CD4-positive, alpha-beta memory T cell (primary cell): ENCODE measurements at regions of chr4 and their contacts with region 1.

Region 1: DNA sequence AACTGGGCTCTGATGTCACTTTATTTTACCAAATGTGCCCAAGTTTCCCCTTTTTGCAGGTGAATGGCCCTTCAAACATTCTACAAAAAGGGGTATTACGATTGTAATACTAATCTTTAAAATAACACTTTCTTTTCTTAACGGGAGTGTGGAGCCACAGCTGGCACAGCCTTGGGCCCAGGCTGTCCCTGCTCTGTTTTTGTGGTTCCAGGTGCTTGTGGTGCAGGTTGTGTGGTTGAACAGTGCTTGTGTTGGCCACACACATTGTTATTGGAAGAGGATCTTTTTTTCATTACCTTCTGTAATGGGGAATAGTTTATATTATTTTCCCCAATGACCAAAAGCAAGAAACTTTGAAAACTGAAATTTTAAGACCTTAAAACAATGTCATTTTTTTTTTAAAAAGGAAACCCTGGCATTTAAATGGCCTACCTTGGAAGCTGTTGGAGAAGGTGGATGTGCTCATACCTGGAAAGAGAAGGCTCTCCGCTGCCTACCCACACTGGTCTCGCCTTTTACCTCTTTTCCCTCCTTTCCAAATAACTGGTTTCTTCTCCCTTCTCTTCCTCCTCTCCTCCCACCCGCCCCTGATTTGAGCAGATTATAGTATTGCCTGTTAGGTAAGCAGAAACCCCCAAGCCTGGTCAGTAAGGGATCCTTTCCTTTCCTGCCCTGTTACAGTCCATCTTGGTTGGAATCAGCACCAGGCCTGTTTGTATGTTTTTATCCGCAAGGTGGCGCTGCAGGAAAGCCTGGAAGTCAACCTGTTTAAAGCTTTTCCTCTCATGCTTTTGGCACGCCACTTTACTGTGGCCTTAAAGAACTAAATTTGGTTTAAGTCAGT is 28.6 kb downstream of the HADH start:
- DNase-seq: peak; percentile 72 to 77 (median 74)
- H3K4me3 ChIP-seq: no peak overlapping the region
- H3K4me3 Mint-ChIP-seq: no peak overlapping the region
- H3K27ac ChIP-seq: no peak overlapping the region
- H3K27ac Mint-ChIP-seq: peak overlapping the region in 2 of 7 donors; percentile 15 to 65
- H3K4me1 ChIP-seq: no peaks in the 10 kb centered on the region
- H3K4me1 Mint-ChIP-seq: peaks cover 1 to 12% (median 3%) of the 10 kb centered on the region in 4 donors
- H3K27me3 ChIP-seq: no peaks in the 10 kb centered on the region
- H3K27me3 Mint-ChIP-seq: no peaks in the 10 kb centered on the region

Region 2: DNA sequence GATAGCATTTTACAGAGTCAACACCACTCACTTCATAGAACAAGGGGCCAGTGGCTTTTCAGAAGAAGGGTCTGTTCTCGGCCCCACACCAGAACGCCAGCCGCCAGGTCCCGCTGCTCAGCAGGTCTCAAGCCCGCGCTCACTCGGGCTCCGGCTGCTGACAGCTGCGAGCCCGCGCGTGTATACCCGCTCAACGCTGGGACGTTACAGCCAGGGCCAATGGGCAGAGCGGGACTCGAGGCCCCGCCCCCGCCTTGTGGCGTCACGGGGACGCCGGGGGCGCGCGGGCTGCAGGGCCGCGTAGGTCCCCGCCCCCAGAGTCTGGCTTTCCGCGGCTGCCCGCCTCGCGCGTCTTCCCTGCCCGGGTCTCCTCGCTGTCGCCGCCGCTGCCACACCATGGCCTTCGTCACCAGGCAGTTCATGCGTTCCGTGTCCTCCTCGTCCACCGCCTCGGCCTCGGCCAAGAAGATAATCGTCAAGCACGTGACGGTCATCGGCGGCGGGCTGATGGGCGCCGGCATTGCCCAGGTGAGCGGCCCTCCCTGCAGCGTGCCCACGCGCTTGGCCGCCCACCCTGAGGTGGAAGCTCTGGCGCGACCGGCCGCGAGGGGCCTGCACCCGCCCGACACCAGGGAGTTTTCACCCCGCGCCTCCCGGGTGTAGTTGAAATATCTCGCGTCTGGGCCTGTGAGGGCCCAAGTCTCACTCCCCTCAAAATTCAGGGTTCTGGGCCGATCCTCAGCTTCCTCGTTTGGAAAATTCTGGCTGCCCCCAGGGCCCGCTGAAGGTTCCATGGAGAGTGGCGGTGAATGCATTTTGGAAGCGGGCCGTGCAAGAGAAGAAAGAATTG is 28.5 kb before region 1 on chr4 and contains the start of gene HADH:
- CTCF ChIA-PET with region 1: interaction called, 10 read pairs
- POLR2A ChIA-PET with region 1: interaction called, 3 read pairs
- intact Hi-C with region 1: no loop called
- DNase-seq: peak; percentile 92 to 95 (median 95)
- H3K4me3 ChIP-seq: peak within 1 kb of the TSS; percentile 49 to 75
- H3K4me3 Mint-ChIP-seq: peak within 1 kb of the TSS; percentile 90 to 99 (median 97)
- H3K27ac ChIP-seq: peak within 1 kb of the TSS; percentile 80
- H3K27ac Mint-ChIP-seq: peak within 1 kb of the TSS; percentile 87 to 98 (median 96)
- H3K4me1 ChIP-seq: peaks cover 39% of the 10 kb centered on the region
- H3K4me1 Mint-ChIP-seq: peaks cover 30 to 53% (median 42%) of the 10 kb centered on the region in 4 donors
- H3K27me3 ChIP-seq: no peaks in the 10 kb centered on the region
- H3K27me3 Mint-ChIP-seq: no peaks in the 10 kb centered on the region
- total RNA-seq, gene HADH: 20.0 to 23.0 TPM

Region 3: DNA sequence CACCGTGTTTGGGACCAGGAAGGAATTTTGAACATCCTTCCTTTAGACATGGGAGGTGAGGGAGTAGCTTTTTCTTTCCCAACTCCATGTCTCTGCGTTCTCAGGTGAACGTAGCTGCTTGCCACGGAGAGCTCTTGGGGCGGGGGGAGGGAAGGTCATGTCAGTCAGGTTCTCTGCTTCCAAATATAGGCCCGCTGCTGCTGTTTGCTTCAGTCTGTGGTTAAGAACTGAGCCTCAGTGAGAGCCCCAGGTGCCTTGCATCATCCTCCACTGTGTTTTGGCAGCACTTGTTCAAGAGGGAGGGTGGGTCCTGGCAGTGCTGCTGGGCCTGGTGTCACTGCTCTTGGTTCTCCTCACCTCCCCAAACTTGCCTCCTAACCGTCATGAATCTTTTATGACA is 18.0 kb after region 1 on chr4:
- CTCF ChIA-PET with region 1: interaction called, 10 read pairs
- POLR2A ChIA-PET with region 1: no interaction called
- intact Hi-C with region 1: no loop called
- DNase-seq: peak; percentile 45 to 74 (median 60)
- H3K4me3 ChIP-seq: no peak overlapping the region
- H3K4me3 Mint-ChIP-seq: peak overlapping the region in 7 of 8 donors; percentile 21 to 75 (median 60)
- H3K27ac ChIP-seq: peak overlapping the region; percentile 0
- H3K27ac Mint-ChIP-seq: peak overlapping the region; percentile 59 to 93 (median 88)
- H3K4me1 ChIP-seq: peaks cover 13% of the 10 kb centered on the region
- H3K4me1 Mint-ChIP-seq: peaks cover 8 to 23% (median 13%) of the 10 kb centered on the region in 4 donors
- H3K27me3 ChIP-seq: no peaks in the 10 kb centered on the region
- H3K27me3 Mint-ChIP-seq: no peaks in the 10 kb centered on the region

Region 4: GRCh38 chr4:108492816-108493595 is 474.7 kb after region 1 on chr4:
- CTCF ChIA-PET with region 1: interaction called, 21 read pairs
- POLR2A ChIA-PET with region 1: interaction called, 3 read pairs
- intact Hi-C with region 1: loop called (anchors 1 kb)
- DNase-seq: peak in 3 of 5 donors; percentile 8 to 29 (median 20)
- H3K4me3 ChIP-seq: peak overlapping the region in 1 of 2 donors; percentile 6
- H3K4me3 Mint-ChIP-seq: peak overlapping the region in 1 of 8 donors; percentile 13
- H3K27ac ChIP-seq: no peak overlapping the region
- H3K27ac Mint-ChIP-seq: no peak overlapping the region
- H3K4me1 ChIP-seq: no peaks in the 10 kb centered on the region
- H3K4me1 Mint-ChIP-seq: peaks cover 0 to 4% (median under 1%) of the 10 kb centered on the region in 4 donors
- H3K27me3 ChIP-seq: no peaks in the 10 kb centered on the region
- H3K27me3 Mint-ChIP-seq: no peaks in the 10 kb centered on the region

Region 5: GRCh38 chr4:108560616-108561015 is 542.4 kb after region 1 on chr4:
- CTCF ChIA-PET with region 1: interaction called, 19 read pairs
- POLR2A ChIA-PET with region 1: no interaction called
- intact Hi-C with region 1: no loop called
- DNase-seq: no peak
- H3K4me3 ChIP-seq: no peak overlapping the region
- H3K4me3 Mint-ChIP-seq: no peak overlapping the region
- H3K27ac ChIP-seq: no peak overlapping the region
- H3K27ac Mint-ChIP-seq: no peak overlapping the region
- H3K4me1 ChIP-seq: no peaks in the 10 kb centered on the region
- H3K4me1 Mint-ChIP-seq: peaks cover 0 to 4% (median 0%) of the 10 kb centered on the region in 4 donors
- H3K27me3 ChIP-seq: no peaks in the 10 kb centered on the region
- H3K27me3 Mint-ChIP-seq: peaks cover 0 to 2% of the 10 kb centered on the region in 2 donors

Region 6: DNA sequence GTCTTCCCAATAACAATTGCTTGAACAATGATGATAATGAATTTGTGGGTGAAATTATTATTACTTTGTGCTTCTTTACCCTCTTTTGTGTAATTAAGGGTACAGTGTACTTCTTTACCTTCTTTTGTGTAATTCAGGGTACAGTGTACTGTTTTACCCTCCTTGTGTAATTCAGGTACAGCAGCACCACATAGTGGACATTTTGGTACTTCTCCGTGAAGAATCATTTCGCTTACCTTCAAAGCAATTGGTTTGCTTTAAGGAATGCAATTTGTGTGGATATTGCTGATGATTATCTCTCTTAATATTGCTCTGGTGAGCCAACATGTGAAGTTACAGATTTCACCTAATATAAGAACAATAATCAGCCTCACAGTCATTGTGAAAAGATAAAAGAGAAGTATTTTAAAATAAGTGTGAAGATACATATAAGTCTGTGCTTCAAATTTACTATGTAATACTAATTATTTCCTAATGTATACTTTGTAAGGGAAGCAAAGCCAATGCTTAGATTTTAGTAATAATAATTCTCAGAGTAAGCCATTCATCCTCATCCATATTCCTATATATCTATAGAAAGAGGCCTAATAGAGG is 1388.2 kb after region 1 on chr4:
- CTCF ChIA-PET with region 1: interaction called, 5 read pairs
- POLR2A ChIA-PET with region 1: no interaction called
- intact Hi-C with region 1: loop called (anchors 1 kb)
- DNase-seq: peak; percentile 35 to 51 (median 43)
- H3K4me3 ChIP-seq: no peak overlapping the region
- H3K4me3 Mint-ChIP-seq: no peak overlapping the region
- H3K27ac ChIP-seq: no peak overlapping the region
- H3K27ac Mint-ChIP-seq: no peak overlapping the region
- H3K4me1 ChIP-seq: no peaks in the 10 kb centered on the region
- H3K4me1 Mint-ChIP-seq: no peaks in the 10 kb centered on the region
- H3K27me3 ChIP-seq: no peaks in the 10 kb centered on the region
- H3K27me3 Mint-ChIP-seq: peaks cover 0 to 1% of the 10 kb centered on the region in 2 donors